MCF 10A (cell line): ENCODE measurements at regions of chr11 and their contacts with region 1.

Region 1: GRCh38 chr11:45846974-45847910 is at the start of gene CRY2:
- DNase-seq: peak; percentile 98
- H3K4me3 Mint-ChIP-seq: peak within 1 kb of the TSS; percentile 75
- H3K27ac Mint-ChIP-seq: peak within 1 kb of the TSS; percentile 66
- H3K4me1 Mint-ChIP-seq: peaks cover 18% of the 10 kb centered on the region
- H3K27me3 Mint-ChIP-seq: peaks cover 11% of the 10 kb centered on the region
- CTCF ChIP-seq: no peak
- total RNA-seq, gene CRY2: 8.1 and 8.6 TPM in 2 replicates

Region 2: GRCh38 chr11:45606514-45607281 is 240.5 kb before region 1 on chr11:
- CTCF ChIA-PET with region 1: no interaction called
- POLR2A ChIA-PET with region 1: no interaction called
- intact Hi-C with region 1: no loop called
- DNase-seq: no peak
- H3K4me3 Mint-ChIP-seq: no peak overlapping the region
- H3K27ac Mint-ChIP-seq: no peak overlapping the region
- H3K4me1 Mint-ChIP-seq: no peaks in the 10 kb centered on the region
- H3K27me3 Mint-ChIP-seq: peaks cover 59% of the 10 kb centered on the region
- CTCF ChIP-seq: no peak

Region 3: GRCh38 chr11:45722144-45722543 is 125.1 kb before region 1 on chr11:
- CTCF ChIA-PET with region 1: no interaction called
- POLR2A ChIA-PET with region 1: no interaction called
- intact Hi-C with region 1: no loop called
- DNase-seq: no peak
- H3K4me3 Mint-ChIP-seq: no peak overlapping the region
- H3K27ac Mint-ChIP-seq: no peak overlapping the region
- H3K4me1 Mint-ChIP-seq: no peaks in the 10 kb centered on the region
- H3K27me3 Mint-ChIP-seq: peaks cover 4% of the 10 kb centered on the region
- CTCF ChIP-seq: no peak

Region 4: DNA sequence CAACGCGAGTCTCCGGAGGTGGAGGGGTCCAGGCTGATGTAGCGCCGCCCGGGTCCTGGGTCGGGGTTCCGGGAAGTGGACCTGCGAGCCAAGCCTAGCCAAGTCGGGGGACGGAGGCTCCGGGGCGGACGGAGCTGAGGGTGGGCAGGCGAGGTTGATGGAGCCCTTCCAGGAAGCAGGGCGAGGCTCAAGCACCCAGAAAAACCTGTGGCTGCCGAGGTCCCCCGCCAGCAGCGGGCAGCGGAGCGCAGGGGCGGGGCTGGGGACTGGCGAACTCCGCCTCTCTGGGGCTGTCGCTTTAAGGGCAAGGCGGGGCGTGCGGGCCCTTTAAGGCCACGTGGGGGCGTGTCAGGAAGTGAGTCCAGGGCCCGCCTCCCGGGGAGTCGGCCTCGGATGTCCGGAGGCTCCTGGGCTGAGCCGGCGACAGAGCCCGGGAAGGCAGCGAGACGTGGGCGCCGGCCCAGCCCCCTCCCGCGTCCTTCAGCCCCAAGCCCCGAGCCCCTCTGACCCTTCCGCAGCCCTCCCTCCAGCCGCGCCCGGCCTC is 42.4 kb before region 1 on chr11 and contains the start of gene SLC35C1:
- CTCF ChIA-PET with region 1: interaction called, 3 read pairs
- POLR2A ChIA-PET with region 1: interaction called, 6 read pairs
- intact Hi-C with region 1: loop called (anchors 1 kb)
- DNase-seq: peak; percentile 95
- H3K4me3 Mint-ChIP-seq: peak within 1 kb of the TSS; percentile 97
- H3K27ac Mint-ChIP-seq: peak within 1 kb of the TSS; percentile 88
- H3K4me1 Mint-ChIP-seq: peaks cover 27% of the 10 kb centered on the region
- H3K27me3 Mint-ChIP-seq: no peaks in the 10 kb centered on the region
- CTCF ChIP-seq: no peak
- total RNA-seq, gene SLC35C1: 11.9 and 14.4 TPM in 2 replicates

Region 5: GRCh38 chr11:45834298-45834756 is 12.9 kb before region 1 on chr11:
- CTCF ChIA-PET with region 1: interaction called, 15 read pairs
- POLR2A ChIA-PET with region 1: interaction called, 7 read pairs
- intact Hi-C with region 1: no loop called
- DNase-seq: no peak
- H3K4me3 Mint-ChIP-seq: no peak overlapping the region
- H3K27ac Mint-ChIP-seq: no peak overlapping the region
- H3K4me1 Mint-ChIP-seq: peaks cover 6% of the 10 kb centered on the region
- H3K27me3 Mint-ChIP-seq: peaks cover 37% of the 10 kb centered on the region
- CTCF ChIP-seq: no peak

Region 6: DNA sequence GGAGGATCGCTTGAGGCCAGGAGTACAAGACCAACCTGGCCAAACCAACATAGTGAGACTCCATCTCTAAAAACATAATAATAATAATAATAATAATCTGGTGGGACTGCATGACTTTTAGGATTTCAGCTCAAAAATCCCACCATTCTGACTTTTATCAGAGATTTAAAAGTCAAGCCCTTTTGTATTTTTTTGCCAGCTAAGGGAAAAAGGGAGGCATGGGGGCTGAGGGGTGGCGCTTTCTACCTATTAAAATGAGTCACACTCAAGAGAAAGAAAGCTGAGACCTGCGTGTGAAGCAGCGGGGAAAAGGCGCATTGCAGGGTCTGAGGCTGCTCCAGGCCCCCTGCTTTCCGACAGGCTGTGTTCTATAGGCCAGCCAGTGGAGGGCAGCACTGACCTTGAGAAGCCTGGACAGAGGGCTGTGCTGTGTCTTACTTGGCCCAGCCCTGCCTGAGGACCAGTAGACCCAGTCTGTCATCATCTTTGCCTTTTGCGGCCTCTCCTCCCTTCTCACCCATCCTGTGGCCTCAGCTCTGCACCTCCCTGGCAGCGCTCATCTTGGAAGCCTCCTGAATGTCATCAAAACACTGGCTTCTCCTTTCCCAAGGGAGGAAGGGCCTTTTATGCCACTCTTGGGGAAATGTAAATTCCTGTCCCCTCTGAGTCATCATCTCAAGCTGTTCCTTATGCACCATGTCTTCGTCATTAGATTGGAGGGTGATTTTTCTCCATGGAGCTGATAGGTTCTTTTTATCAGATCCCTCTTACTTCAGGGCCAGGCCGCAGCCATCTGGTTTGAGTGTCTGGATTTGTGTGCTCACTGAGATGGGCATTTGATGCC is 25.5 kb after region 1 on chr11:
- CTCF ChIA-PET with region 1: interaction called, 13 read pairs
- POLR2A ChIA-PET with region 1: interaction called, 4 read pairs
- intact Hi-C with region 1: no loop called
- DNase-seq: peak; percentile 75
- H3K4me3 Mint-ChIP-seq: no peak overlapping the region
- H3K27ac Mint-ChIP-seq: no peak overlapping the region
- H3K4me1 Mint-ChIP-seq: no peaks in the 10 kb centered on the region
- H3K27me3 Mint-ChIP-seq: no peaks in the 10 kb centered on the region
- CTCF ChIP-seq: peak; percentile 76

Region 7: GRCh38 chr11:45917623-45918330 is 70.5 kb after region 1 on chr11 and contains the start of gene PEX16:
- CTCF ChIA-PET with region 1: interaction called, 4 read pairs
- POLR2A ChIA-PET with region 1: interaction called, 11 read pairs
- intact Hi-C with region 1: loop called (anchors 1 kb)
- DNase-seq: peak; percentile 98
- H3K4me3 Mint-ChIP-seq: peak within 1 kb of the TSS; percentile 92
- H3K27ac Mint-ChIP-seq: peak within 1 kb of the TSS; percentile 95
- H3K4me1 Mint-ChIP-seq: no peaks in the 10 kb centered on the region
- H3K27me3 Mint-ChIP-seq: no peaks in the 10 kb centered on the region
- CTCF ChIP-seq: no peak
- total RNA-seq, gene PEX16: 28.1 and 30.2 TPM in 2 replicates